Breast epithelium (tissue), 4 donors: ENCODE measurements at regions of chr16 and their contacts with region 1.

Region 1: DNA sequence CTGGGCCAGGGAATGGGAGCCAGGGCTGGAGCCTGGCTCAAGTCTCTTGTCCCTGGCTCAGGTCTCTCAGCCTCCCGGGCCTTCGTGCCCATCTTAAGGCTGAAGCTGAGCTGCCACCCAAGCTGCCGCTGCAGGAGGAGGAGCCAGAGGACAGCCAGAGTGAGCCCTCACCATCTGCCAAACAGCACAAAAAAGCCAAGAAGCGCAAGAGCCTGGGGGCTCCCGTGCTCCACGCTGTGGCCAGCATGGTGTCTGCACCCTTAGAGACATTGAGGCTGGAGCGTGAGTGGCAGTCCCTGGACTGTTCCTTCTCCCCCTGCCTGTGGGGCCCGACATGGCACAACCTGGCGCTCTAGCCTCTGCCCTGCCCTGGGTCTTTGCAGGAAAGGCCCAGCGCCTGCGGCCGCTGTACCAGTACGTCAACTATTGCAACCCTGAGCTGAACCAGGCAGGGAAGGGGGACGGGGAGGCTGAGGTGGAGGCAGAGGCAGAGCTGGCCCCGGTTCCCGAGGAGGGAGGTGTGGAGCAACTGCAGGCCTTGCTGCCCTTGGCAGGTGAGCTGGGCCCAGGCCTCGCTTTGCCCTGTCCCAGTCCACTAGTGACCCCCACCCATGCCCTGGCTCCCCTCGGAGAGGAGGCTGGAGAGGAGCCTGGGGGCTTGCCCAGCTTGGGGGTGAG is 1.3 kb downstream of the C16orf86 start:
- DNase-seq: peak; percentile 87 to 91
- H3K4me3 ChIP-seq: peak overlapping the region; percentile 73 to 99 (median 93)
- H3K27ac ChIP-seq: peak overlapping the region; percentile 89 to 97
- H3K4me1 ChIP-seq: peaks cover 12 to 14% of the 10 kb centered on the region in 2 donors
- H3K27me3 ChIP-seq: no peaks in the 10 kb centered on the region
- CTCF ChIP-seq: peak; percentile 71 to 96 (median 92)
- POLR2A ChIP-seq: no peak

Region 2: DNA sequence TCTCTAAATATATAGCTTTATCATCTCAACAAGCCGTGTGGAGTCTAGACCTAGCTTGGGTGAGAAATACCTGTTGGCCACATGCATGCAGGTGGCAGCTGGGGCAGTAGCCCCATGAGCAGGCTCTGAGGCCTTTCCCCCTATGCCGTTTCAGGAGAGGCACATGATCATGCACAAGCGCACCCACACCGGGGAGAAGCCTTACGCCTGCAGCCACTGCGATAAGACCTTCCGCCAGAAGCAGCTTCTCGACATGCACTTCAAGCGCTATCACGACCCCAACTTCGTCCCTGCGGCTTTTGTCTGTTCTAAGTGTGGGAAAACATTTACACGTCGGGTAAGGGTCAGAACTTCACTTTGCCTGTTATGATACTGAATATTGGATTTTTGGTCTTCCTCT is 39.7 kb before region 1 on chr16:
- intact Hi-C with region 1: no loop called
- DNase-seq: no peak
- H3K4me3 ChIP-seq: no peak overlapping the region
- H3K27ac ChIP-seq: no peak overlapping the region
- H3K4me1 ChIP-seq: peaks cover 0 to 3% of the 10 kb centered on the region in 2 donors
- H3K27me3 ChIP-seq: no peaks in the 10 kb centered on the region
- CTCF ChIP-seq: no peak
- POLR2A ChIP-seq: no peak

Region 3: GRCh38 chr16:67806428-67807147 is 138.6 kb after region 1 on chr16 and contains the starts of genes RANBP10 and TSNAXIP1:
- intact Hi-C with region 1: loop called (anchors 10 kb)
- DNase-seq: peak; percentile 98 to 99
- H3K4me3 ChIP-seq: peak within 1 kb of the TSS; percentile 93 to 98 (median 98)
- H3K27ac ChIP-seq: peak within 1 kb of the TSS; percentile 92
- H3K4me1 ChIP-seq: peaks cover 0 to 8% of the 10 kb centered on the region in 2 donors
- H3K27me3 ChIP-seq: no peaks in the 10 kb centered on the region
- CTCF ChIP-seq: no peak
- POLR2A ChIP-seq: peak; percentile 56
- total RNA-seq, gene RANBP10: 7.7 to 13.2 (median 13.1) TPM
- total RNA-seq, gene TSNAXIP1: 1.1 to 4.2 (median 3.9) TPM

Region 4: DNA sequence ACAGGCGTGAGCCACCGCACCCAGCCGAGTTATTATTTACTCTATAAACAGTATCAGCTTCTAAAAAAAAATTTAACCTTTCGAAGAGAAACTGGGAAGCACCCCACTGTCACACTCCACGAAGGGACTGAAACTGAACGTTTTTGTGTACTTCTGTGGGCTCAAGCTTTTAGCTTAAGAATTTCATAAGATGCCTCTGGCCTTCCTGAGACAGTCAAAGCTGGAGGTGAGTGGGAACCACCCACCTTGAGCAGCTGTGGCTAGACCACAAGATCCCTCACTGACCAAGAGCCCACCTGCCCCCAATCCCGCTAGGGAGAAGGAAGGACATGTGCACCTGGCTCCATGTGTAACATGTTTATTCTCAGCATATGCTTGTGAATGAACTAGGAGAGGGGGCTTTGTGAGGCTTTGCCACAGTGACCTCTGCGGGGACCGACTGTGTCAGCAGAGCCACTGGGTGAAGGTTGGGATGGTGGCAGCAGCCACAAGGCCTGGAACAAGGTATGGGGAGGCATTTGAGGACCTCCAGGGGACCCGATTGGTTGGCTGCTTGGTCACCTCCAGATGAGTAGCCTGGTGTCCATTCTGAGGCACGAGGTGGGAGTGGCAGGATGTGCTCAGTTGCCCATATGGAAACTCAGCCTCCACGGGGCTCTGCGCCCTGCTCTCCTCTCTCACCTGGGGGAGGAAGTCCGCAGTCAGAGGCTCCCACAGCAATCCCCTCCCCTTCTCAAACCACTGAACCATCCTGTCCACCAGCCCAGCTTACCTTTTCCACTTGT is 307.6 kb after region 1 on chr16:
- intact Hi-C with region 1: no loop called
- DNase-seq: no peak
- H3K4me3 ChIP-seq: no peak overlapping the region
- H3K27ac ChIP-seq: no peak overlapping the region
- H3K4me1 ChIP-seq: no peaks in the 10 kb centered on the region
- H3K27me3 ChIP-seq: no peaks in the 10 kb centered on the region
- CTCF ChIP-seq: no peak
- POLR2A ChIP-seq: no peak